H1 (cell line): ENCODE measurements at regions of chr9 and their contacts with region 1.

Region 1: DNA sequence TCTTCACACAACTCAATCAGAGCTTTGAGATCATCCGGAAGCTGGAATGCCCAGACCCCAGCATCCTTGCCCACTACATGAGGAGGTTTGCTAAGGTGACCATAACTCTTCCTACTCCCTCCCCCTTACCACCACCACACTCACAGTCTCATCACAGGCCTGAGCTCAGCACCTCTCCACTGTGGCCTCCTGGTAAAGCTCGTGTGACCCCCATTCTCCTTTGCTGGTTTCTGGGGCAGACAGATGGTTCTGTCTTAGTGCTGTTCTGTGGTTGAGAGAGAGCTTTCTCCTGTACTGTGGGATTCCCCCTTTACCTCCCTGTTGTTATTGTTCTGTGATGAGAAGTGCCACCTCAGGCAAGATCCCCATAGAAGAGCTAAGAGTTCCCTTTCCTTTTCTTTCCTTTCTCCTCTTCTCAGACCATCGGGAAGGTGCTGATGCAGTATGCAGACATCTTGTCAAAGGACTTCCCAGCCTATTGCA is 92.7 kb upstream of the RUSC2 start:
- DNase-seq: peak in 1 of 2 experiments; percentile 6
- H3K4me3 ChIP-seq: no peak overlapping the region
- H3K27ac ChIP-seq: no peak overlapping the region
- H3K4me1 ChIP-seq: no peaks in the 10 kb centered on the region
- H3K27me3 ChIP-seq: no peaks in the 10 kb centered on the region
- CTCF ChIP-seq: no peak
- EP300 ChIP-seq: no peak
- POLR2A ChIP-seq: no peak
- RAD21 ChIP-seq: no peak

Region 2: GRCh38 chr9:35385042-35385441 is 12.2 kb before region 1 on chr9:
- CTCF ChIA-PET with region 1: interaction called, 10 read pairs
- POLR2A ChIA-PET with region 1: interaction called, 3 read pairs
- DNase-seq: no peak
- H3K4me3 ChIP-seq: no peak overlapping the region
- H3K27ac ChIP-seq: no peak overlapping the region
- H3K4me1 ChIP-seq: no peaks in the 10 kb centered on the region
- H3K27me3 ChIP-seq: no peaks in the 10 kb centered on the region
- CTCF ChIP-seq: peak in 2 of 3 experiments; percentile 26 to 28; a peak in 2 of 4 replicates
- EP300 ChIP-seq: no peak
- POLR2A ChIP-seq: no peak
- RAD21 ChIP-seq: peak; percentile 30 to 39; a peak in 3 of 4 replicates